ENCODE measurements at regions of chr1 and their contacts with region 1.

Region 1: GRCh38 chr1:172719694-172720138 is 60.8 kb downstream of the FASLG start:
- DNase-seq: peak; percentile 75
- H3K4me3 Mint-ChIP-seq: peak overlapping the region; percentile 3
- H3K27ac Mint-ChIP-seq: no peak overlapping the region
- H3K4me1 Mint-ChIP-seq: peaks cover 35% of the 10 kb centered on the region
- H3K27me3 Mint-ChIP-seq: no peaks in the 10 kb centered on the region
- CTCF ChIP-seq: peak; percentile 94

Region 2: DNA sequence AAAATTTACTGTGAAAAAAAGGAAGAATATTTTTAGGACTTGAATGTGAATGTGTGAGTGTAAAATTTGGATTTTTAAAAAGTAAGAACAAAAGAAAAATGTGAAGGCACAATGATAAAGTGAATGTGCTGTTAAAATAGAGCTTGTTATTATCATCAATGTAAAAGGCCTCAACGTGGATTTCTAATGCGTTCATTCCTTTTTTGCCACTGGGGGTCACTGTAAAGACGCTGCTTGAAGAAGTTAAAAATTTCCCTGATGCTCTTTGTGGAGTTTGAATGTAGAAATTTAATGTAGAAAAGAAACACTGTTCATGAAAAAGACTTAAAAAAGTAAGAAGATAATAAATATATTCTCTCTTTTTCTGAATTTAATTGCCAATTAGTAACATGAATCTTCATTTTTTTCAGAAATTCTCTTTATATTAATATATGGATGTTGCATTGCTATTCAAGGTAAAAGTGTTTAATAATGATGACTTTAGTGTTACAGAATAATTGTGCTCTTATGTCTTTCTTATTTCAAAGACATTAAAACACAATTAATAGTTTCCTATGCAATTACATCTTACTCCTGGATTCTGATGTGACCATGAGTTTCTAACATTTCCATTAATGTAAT is 716.9 kb before region 1 on chr1:
- CTCF ChIA-PET with region 1: interaction called, 5 read pairs
- POLR2A ChIA-PET with region 1: no interaction called
- intact Hi-C with region 1: loop called (anchors 5 kb)
- DNase-seq: peak; percentile 70
- H3K4me3 Mint-ChIP-seq: no peak overlapping the region
- H3K27ac Mint-ChIP-seq: no peak overlapping the region
- H3K4me1 Mint-ChIP-seq: peaks cover 18% of the 10 kb centered on the region
- H3K27me3 Mint-ChIP-seq: no peaks in the 10 kb centered on the region
- CTCF ChIP-seq: peak; percentile 95

Region 3: GRCh38 chr1:172443626-172444453 is 275.9 kb before region 1 on chr1 and contains the start of gene PIGC:
- CTCF ChIA-PET with region 1: interaction called, 89 read pairs
- POLR2A ChIA-PET with region 1: interaction called, 4 read pairs
- intact Hi-C with region 1: no loop called
- DNase-seq: peak; percentile 93
- H3K4me3 Mint-ChIP-seq: peak within 1 kb of the TSS; percentile 85
- H3K27ac Mint-ChIP-seq: peak within 1 kb of the TSS; percentile 92
- H3K4me1 Mint-ChIP-seq: peaks cover 33% of the 10 kb centered on the region
- H3K27me3 Mint-ChIP-seq: no peaks in the 10 kb centered on the region
- CTCF ChIP-seq: peak; percentile 87
- total RNA-seq, gene PIGC: 20.2 and 23.1 TPM in 2 replicates

Region 4: DNA sequence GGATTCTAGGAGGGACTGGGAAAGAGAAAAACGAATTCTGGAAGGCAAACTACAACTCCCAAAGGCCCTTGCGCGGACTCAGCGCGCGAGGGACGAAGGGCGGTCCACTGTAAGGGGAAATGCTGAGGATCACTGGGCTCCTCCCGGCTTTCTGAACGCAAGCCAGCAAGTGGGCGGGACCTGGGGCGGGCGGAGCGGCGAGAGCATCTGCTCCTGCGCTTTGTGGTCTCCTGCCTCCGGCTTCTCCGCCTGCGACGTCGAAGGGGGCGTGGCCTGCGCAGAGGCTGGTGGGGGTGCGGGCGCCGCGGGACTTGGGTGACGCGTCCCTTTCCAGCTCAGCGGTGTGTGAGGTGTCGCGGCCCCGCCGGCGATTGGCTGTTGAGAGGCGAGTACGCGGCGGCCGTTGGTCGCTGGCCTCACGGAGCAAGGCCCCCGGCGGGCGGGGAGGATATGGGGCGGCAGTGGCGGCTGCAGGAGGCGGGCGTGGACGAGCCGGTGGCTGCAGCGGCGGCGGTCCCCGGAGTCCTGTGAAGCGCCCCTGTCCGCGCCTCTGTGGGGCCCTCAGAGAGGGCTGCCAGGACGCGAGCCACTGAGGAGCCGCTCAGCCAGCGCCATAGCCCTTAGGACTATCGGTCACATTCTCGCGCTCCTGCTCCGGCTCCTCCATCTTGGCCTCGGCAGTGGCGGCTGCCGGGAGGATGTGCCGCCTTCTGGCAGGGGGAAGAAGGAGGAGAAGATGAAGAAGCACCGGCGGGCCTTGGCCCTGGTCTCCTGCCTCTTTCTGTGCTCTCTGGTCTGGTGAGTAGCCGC is 186.8 kb before region 1 on chr1 and contains the start of gene SUCO:
- CTCF ChIA-PET with region 1: interaction called, 4 read pairs
- POLR2A ChIA-PET with region 1: interaction called, 11 read pairs
- intact Hi-C with region 1: loop called (anchors 1 kb)
- DNase-seq: peak; percentile 100
- H3K4me3 Mint-ChIP-seq: peak within 1 kb of the TSS; percentile 90
- H3K27ac Mint-ChIP-seq: peak within 1 kb of the TSS; percentile 98
- H3K4me1 Mint-ChIP-seq: peaks cover 38% of the 10 kb centered on the region
- H3K27me3 Mint-ChIP-seq: no peaks in the 10 kb centered on the region
- CTCF ChIP-seq: no peak
- total RNA-seq, gene SUCO: 47.9 and 54.3 TPM in 2 replicates

Region 5: DNA sequence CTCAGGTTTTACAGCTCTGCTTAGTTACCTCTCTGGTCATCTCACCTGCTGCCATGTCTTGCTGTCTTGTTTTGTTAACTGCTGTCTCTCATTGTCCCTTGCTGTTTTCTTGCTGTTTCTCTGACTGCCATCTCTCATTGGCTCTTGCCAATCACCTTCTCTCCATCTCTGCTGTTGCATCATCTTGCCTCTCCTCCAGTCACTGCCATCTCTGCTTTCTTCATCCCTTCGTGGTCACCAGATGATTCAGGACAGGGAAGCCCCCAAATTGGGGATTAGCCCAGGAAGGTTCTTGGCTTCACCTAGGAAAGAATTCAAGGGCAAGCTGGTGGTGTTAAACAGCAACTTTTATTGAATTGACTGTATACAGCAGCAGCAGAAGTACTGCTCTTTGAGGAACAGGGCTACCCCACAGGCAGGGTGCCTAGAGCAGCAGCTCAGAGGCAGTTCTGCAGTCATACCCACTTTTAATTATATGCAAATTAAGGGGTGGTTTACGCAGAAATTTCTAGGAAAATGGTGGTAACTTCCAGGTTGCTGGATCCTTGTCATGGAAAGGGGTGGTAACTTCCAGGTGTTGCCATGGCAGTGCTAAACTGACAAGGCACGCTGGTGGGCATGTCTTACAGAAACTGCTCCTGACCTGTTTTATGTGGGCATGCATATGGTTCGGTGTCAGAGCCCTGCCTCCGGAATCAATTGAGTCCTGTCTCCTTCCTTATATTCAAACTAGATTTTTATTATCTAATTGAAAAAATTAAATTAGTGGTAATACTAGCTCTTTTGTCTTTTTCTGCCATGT is 153.3 kb before region 1 on chr1:
- CTCF ChIA-PET with region 1: no interaction called
- POLR2A ChIA-PET with region 1: no interaction called
- intact Hi-C with region 1: no loop called
- DNase-seq: no peak
- H3K4me3 Mint-ChIP-seq: no peak overlapping the region
- H3K27ac Mint-ChIP-seq: no peak overlapping the region
- H3K4me1 Mint-ChIP-seq: peaks cover 6% of the 10 kb centered on the region
- H3K27me3 Mint-ChIP-seq: no peaks in the 10 kb centered on the region
- CTCF ChIP-seq: no peak

Region 6: GRCh38 chr1:172616195-172616970 is 103.3 kb before region 1 on chr1:
- CTCF ChIA-PET with region 1: interaction called, 220 read pairs
- POLR2A ChIA-PET with region 1: interaction called, 31 read pairs
- intact Hi-C with region 1: no loop called
- DNase-seq: no peak
- H3K4me3 Mint-ChIP-seq: no peak overlapping the region
- H3K27ac Mint-ChIP-seq: no peak overlapping the region
- H3K4me1 Mint-ChIP-seq: no peaks in the 10 kb centered on the region
- H3K27me3 Mint-ChIP-seq: no peaks in the 10 kb centered on the region
- CTCF ChIP-seq: no peak

Region 7: DNA sequence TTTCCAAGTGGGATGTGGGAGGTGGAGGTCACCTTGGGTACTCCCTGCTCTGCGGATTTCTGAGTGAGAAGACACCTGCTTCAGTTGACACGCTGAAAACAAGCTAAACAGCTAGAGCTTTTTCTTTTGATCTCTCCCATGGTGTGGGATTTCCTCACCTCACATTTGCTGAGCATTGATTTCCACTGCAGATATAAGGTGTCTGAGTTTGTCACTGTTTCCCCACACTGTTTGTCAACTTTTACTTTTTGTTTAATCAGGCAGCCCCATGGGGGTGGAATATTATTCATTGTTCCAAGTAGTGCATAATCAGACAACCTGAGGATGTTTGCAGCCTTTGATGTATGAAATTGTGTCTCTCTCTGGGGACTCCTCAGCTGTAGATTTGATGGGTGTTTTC is 11.3 kb before region 1 on chr1:
- CTCF ChIA-PET with region 1: interaction called, 17 read pairs
- POLR2A ChIA-PET with region 1: interaction called, 5 read pairs
- intact Hi-C with region 1: no loop called
- DNase-seq: no peak
- H3K4me3 Mint-ChIP-seq: no peak overlapping the region
- H3K27ac Mint-ChIP-seq: no peak overlapping the region
- H3K4me1 Mint-ChIP-seq: no peaks in the 10 kb centered on the region
- H3K27me3 Mint-ChIP-seq: no peaks in the 10 kb centered on the region
- CTCF ChIP-seq: no peak